ENCODE measurements at regions of chr15 and their contacts with region 1.

Region 1: DNA sequence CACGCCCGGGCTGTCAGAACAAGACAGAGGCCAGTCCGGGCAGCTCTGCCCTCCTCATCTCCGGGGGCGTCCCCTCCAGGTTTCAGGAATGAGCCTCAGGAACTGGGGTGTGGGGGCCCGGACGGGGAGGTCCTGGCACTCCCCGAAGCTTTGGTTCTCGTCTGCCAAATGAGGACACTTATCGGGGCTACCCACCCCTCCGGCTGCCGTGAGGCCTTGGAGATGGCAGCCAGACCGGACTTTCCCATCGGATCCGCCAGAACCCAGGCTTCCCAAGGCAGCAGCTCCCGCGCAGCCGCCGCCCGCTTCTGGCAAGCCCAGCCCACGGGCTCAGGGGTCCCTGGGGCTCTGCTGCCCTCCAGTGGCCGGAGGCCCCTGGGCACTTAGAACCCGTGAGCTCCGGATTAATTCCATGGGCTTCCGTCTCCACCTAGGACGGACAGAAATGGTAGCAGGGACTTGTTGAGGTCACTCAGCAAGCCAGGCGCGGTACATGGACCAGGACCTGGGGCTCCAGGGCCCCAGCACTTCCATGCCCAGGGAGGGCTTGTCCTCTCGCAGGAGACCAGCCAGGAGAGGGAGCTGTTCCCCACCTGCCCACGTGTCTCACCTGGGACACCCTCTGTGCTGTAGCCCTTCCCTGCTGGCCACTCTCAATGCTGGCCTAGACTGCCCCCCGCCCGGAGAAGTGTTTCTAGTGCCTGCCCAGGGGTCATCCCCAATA is 89.4 kb downstream of the LINGO1 start:
- DNase-seq: peak; percentile 91

Region 2: DNA sequence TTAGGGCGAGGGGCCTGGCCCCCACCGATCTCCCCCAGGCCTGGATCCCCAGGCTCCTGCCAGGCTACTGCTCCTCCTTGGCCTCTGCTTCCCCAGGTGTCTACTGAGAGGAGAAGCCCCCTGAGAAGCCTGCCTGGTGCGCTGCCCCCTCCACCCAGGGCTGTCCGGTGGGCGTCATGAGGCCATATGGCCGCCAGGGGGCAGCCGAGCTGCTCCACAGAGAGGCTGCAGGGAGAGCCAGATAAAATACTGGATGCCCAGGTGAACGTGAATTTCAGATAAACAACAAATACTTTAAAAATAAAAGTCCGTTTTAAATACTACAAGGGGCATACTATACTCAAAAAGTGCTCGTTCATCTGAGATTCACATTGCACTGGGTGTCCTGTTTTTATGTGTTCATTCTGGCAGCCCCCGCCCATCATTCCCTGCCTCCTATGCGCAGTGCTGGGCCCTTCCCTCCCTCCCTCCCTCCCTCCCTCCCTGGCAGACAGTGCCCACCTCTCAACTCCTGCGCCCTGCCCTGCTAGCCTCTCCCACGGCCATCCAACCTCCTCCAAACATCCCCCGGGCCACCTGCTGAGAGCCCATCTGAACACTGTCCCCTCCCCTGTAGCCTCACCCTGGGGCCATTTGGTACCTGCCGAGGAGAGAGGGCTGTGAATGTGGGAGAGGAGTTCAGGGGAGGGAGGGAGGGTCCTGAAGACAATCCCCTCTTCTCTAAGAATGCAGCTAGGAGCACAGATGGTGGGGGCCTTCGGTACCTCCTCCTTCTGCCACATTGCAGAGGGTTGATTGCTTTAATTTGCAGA is 518.8 kb before region 1 on chr15:
- intact Hi-C with region 1: loop called (anchors 5 kb)
- DNase-seq: peak; percentile 77

Region 3: GRCh38 chr15:77118882-77119321 is 424.4 kb before region 1 on chr15:
- intact Hi-C with region 1: loop called (anchors 2 kb)
- DNase-seq: no peak

Region 4: DNA sequence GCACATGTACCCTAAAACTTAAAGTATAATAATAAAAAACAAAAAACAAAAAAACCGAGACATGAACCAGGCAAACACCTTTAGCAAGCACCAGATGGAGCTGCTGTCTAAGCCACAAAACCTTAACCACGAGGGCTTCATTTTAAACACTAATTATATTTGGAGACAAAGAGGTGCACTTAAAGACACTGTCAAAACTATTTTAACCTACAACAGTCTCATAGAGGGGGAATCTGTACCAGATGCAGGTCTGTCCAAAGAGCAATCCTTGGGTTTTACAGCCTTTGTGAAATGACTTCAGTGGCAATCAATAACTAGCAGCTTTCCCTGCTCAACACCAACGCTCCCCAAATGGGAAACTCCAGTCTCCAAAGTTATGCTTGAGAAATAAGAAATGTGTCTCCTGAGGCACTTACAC is 356.7 kb before region 1 on chr15:
- intact Hi-C with region 1: loop called (anchors 2 kb)
- DNase-seq: no peak

Region 5: GRCh38 chr15:77507911-77508310 is 35.4 kb before region 1 on chr15:
- intact Hi-C with region 1: loop called (anchors 5 kb)
- DNase-seq: no peak

Measured in cardiac septum (tissue), 1 donor.